ENCODE measurements at regions of chr20 and their contacts with region 1.

Region 1: GRCh38 chr20:5205348-5206210 is 78.8 kb downstream of the CDS2 start:
- DNase-seq: peak; percentile 39 to 78 (median 62)
- ATAC-seq: peak; percentile 77 to 95 (median 90)
- H3K4me3 ChIP-seq: no peak overlapping the region
- H3K27ac ChIP-seq: no peak overlapping the region
- H3K4me1 ChIP-seq: peaks cover 0 to 9% (median 0%) of the 10 kb centered on the region in 3 donors
- H3K27me3 ChIP-seq: no peaks in the 10 kb centered on the region
- CTCF ChIP-seq: peak; percentile 45 to 76 (median 72)

Region 2: DNA sequence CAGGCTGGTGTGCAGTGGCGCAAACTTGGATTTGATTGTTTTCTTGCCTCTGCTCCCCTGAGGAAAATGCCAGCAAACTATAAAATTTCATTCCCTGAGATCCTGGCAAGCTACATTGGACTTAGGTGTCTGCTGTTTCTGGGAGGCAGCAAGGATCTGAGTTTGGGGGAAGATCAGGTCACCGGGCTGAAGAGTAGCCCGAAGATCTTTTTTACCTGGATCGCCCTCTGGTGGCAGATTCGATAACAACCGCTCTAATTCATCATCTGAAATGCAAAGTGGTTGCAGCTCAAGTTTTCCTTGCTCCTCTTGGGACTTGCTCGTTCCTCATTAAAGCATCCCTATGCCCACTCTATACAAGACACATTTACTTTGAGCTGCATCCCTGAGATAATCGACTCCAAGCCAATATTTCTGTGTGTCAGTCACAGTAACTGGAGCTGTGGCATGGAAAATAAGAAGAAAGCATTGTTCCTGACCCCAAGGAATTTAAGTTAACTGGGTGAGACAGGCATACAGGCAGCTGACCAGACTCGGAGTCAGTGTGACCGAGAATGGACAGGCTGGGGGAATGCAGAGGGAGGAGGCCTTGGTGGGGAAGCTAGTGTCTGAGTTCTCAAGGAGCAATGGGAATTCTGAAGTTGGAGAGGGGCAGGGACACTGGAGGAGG is 243.0 kb after region 1 on chr20:
- intact Hi-C with region 1: loop called in 1 of 3 experiments (anchors 10 kb)
- DNase-seq: peak in 3 of 6 donors; percentile 14 to 58 (median 29)
- ATAC-seq: peak in 3 of 4 donors; percentile 77
- H3K4me3 ChIP-seq: no peak overlapping the region
- H3K27ac ChIP-seq: no peak overlapping the region
- H3K4me1 ChIP-seq: no peaks in the 10 kb centered on the region
- H3K27me3 ChIP-seq: no peaks in the 10 kb centered on the region
- CTCF ChIP-seq: peak; percentile 41 to 60 (median 56)

Measured in pancreas (tissue), 10 donors.